Activated CD8-positive, alpha-beta T cell treated with anti-CD3 and anti-CD28 coated beads, Interleukin-2, amount 10 ng/mL, durations not matched to agents 7 days and 5 days (primary cell): ENCODE measurements at regions of chr5 and their contacts with region 1.

Region 1: GRCh38 chr5:59039296-59040023 is 456.6 kb downstream of the RAB3C start:
- DNase-seq: peak; percentile 95
- ATAC-seq: peak; percentile 78
- H3K4me3 Mint-ChIP-seq: peak overlapping the region; percentile 83
- H3K27ac Mint-ChIP-seq: peak overlapping the region; percentile 99
- H3K4me1 Mint-ChIP-seq: peaks cover 50% of the 10 kb centered on the region
- H3K27me3 Mint-ChIP-seq: no peaks in the 10 kb centered on the region

Region 2: GRCh38 chr5:58746321-58746720 is 293.1 kb before region 1 on chr5:
- CTCF ChIA-PET with region 1: no interaction called
- POLR2A ChIA-PET with region 1: no interaction called
- DNase-seq: no peak
- ATAC-seq: no peak
- H3K4me3 Mint-ChIP-seq: no peak overlapping the region
- H3K27ac Mint-ChIP-seq: no peak overlapping the region
- H3K4me1 Mint-ChIP-seq: no peaks in the 10 kb centered on the region
- H3K27me3 Mint-ChIP-seq: peaks cover 10% of the 10 kb centered on the region

Region 3: DNA sequence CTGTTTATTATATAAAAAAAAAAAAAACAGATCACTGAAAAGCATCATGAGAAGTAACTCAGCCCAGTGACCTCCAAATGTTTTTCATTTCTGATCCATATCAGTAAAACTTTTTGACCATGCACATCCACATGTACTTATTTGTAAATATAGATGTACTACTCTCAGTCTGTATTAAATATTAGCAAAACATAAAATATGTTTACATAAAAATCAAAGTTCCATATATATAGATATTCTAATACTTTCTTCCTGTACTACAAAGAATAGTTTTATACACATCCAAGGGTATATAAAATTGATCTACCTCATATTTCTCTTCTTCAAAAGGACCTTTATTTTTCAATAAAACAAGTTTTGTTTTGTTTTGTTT is 147.5 kb before region 1 on chr5:
- CTCF ChIA-PET with region 1: interaction called, 11 read pairs
- POLR2A ChIA-PET with region 1: no interaction called
- DNase-seq: no peak
- ATAC-seq: no peak
- H3K4me3 Mint-ChIP-seq: no peak overlapping the region
- H3K27ac Mint-ChIP-seq: no peak overlapping the region
- H3K4me1 Mint-ChIP-seq: peaks cover 18% of the 10 kb centered on the region
- H3K27me3 Mint-ChIP-seq: peaks cover 9% of the 10 kb centered on the region

Region 4: DNA sequence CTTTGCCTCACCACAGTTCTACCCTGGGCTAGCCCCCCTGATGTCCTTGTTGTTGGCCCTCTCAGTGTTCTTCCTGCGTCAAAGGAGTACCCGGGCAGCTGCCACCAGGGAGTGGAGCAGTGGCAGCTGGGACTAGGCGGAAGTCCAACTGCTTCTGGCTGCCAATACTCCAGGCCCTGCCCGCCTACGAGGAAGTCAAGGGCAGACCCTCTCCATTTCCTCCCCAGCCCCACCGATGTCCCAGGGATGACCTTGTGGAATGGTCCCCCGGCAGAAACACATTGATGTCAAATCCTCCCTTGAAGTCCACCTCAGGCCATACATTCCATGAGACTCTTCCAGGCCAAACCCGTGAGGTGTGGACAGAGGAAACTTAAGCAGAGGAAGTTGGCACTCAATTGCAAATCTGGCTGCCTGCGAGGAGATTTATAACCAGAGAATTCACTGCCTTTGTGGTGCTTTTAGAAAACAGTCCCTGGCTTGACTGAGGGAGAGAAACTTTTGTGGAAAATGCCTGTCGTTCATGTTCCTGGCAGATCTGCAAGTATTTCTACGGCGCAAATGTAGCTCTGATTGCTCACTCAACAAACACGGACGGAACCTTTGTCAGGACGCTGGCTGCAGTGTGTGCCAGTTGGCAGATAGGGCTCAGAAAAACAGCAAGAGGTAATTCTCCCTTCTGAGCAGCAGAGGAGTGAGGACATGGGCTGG is 116.8 kb before region 1 on chr5:
- CTCF ChIA-PET with region 1: no interaction called
- POLR2A ChIA-PET with region 1: no interaction called
- DNase-seq: no peak
- ATAC-seq: no peak
- H3K4me3 Mint-ChIP-seq: no peak overlapping the region
- H3K27ac Mint-ChIP-seq: no peak overlapping the region
- H3K4me1 Mint-ChIP-seq: peaks cover 5% of the 10 kb centered on the region
- H3K27me3 Mint-ChIP-seq: peaks cover 32% of the 10 kb centered on the region

Region 5: DNA sequence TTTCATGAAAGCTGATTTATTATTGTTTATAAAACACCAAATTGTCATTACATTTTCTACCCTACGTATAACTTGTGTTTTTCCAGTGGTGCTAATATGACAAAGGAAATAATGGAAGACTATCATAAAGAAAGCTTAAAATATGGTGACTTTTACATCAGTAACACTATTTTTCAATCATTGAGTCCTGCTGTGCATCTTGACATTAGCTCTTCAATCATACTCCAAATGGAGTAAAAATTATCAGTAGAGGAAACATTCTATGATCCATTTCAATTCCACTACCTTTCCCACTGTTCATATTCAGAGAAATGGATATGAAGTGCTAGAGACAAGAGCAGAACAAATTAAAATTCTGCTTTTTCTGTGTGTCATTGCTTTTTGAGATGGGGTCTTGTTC is 80.0 kb after region 1 on chr5:
- CTCF ChIA-PET with region 1: interaction called, 133 read pairs
- POLR2A ChIA-PET with region 1: interaction called, 51 read pairs
- DNase-seq: no peak
- ATAC-seq: no peak
- H3K4me3 Mint-ChIP-seq: no peak overlapping the region
- H3K27ac Mint-ChIP-seq: no peak overlapping the region
- H3K4me1 Mint-ChIP-seq: peaks cover 16% of the 10 kb centered on the region
- H3K27me3 Mint-ChIP-seq: no peaks in the 10 kb centered on the region

Region 6: GRCh38 chr5:59126708-59127573 is 87.5 kb after region 1 on chr5:
- CTCF ChIA-PET with region 1: interaction called, 133 read pairs
- POLR2A ChIA-PET with region 1: interaction called, 64 read pairs
- DNase-seq: no peak
- ATAC-seq: peak; percentile 35
- H3K4me3 Mint-ChIP-seq: no peak overlapping the region
- H3K27ac Mint-ChIP-seq: no peak overlapping the region
- H3K4me1 Mint-ChIP-seq: peaks cover 19% of the 10 kb centered on the region
- H3K27me3 Mint-ChIP-seq: no peaks in the 10 kb centered on the region

Region 7: DNA sequence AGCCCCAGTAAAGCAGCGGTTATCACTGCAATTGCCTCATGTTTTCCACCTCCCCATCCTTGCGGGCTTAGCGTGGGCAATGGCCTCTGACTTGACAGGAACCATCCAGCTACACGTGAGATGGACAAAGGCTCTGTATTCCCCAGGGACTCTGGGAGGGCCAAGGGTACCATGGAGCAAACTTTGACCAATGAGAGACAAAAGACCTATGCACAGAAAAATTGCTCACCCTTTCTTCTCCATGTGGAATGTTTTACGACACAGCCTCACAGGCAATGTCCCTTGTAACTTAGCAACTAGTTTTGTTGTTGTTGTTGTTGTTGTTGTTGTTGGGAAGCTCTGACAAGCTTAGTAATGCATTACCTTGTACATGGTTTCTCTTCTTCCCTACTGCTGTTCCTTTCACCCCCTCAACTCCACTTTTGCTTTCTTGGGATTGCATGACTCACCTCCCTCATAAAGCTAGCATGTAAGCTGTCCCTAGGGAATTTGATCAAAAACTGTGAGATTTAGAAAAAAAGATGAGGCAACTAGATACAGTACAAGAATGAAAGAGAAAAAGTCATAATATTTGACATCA is 94.3 kb after region 1 on chr5:
- CTCF ChIA-PET with region 1: interaction called, 97 read pairs
- POLR2A ChIA-PET with region 1: interaction called, 64 read pairs
- DNase-seq: no peak
- ATAC-seq: no peak
- H3K4me3 Mint-ChIP-seq: no peak overlapping the region
- H3K27ac Mint-ChIP-seq: peak overlapping the region; percentile 56
- H3K4me1 Mint-ChIP-seq: peaks cover 47% of the 10 kb centered on the region
- H3K27me3 Mint-ChIP-seq: no peaks in the 10 kb centered on the region

Region 8: DNA sequence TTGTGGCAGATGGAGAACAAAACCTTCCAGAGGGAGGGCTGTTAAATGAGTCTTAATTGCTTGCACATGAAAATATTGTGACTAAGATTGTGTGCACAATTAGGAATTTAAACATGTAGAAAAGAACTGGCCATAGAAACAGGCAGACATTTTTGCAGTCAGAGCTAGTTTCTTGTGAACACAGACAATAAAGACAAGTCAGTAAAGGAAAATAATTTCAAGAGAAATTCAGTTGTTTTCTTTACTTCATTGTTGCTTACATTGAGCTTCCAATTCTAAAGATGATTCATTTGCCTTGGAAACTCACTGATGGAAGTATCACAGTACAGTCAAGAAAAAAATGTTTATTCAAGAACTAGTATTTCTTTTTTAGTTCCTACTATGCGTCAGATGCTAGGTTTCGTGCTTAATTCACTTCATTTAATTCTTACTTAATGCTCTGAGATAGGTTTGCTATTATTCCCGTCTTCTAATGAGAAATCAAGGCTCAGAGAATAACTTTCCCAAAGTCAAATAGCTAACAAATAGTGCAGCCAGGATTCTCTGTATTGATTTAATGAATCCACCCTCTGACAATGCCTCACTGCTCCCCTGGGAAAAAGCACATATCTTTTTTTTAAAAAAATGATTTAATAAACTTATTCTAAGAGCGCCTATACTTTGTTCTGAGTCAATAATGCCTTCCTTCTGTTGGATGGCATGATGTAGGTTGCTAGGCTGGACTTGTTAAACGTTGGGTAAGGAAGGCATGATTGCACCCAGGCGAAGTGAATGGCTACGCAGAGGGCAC is 124.8 kb after region 1 on chr5:
- CTCF ChIA-PET with region 1: interaction called, 21 read pairs
- POLR2A ChIA-PET with region 1: no interaction called
- DNase-seq: no peak
- ATAC-seq: no peak
- H3K4me3 Mint-ChIP-seq: no peak overlapping the region
- H3K27ac Mint-ChIP-seq: no peak overlapping the region
- H3K4me1 Mint-ChIP-seq: peaks cover 27% of the 10 kb centered on the region
- H3K27me3 Mint-ChIP-seq: peaks cover 3% of the 10 kb centered on the region